Activated naive CD4-positive, alpha-beta T cell treated with anti-CD3 and anti-CD28 coated beads for 36 hours (primary cell): ENCODE measurements at regions of chr18 and their contacts with region 1.

Region 1: GRCh38 chr18:38790303-38790702 is 1224.7 kb upstream of the CELF4 start:
- DNase-seq: peak; percentile 15
- H3K4me3 Mint-ChIP-seq: no peak overlapping the region
- H3K27ac Mint-ChIP-seq: no peak overlapping the region
- H3K4me1 Mint-ChIP-seq: no peaks in the 10 kb centered on the region
- H3K27me3 Mint-ChIP-seq: no peaks in the 10 kb centered on the region

Region 2: GRCh38 chr18:38545071-38545470 is 245.2 kb before region 1 on chr18:
- CTCF ChIA-PET with region 1: no interaction called
- intact Hi-C with region 1: loop called (anchors 1 kb)
- DNase-seq: peak; percentile 39
- H3K4me3 Mint-ChIP-seq: no peak overlapping the region
- H3K27ac Mint-ChIP-seq: no peak overlapping the region
- H3K4me1 Mint-ChIP-seq: no peaks in the 10 kb centered on the region
- H3K27me3 Mint-ChIP-seq: no peaks in the 10 kb centered on the region

Region 3: DNA sequence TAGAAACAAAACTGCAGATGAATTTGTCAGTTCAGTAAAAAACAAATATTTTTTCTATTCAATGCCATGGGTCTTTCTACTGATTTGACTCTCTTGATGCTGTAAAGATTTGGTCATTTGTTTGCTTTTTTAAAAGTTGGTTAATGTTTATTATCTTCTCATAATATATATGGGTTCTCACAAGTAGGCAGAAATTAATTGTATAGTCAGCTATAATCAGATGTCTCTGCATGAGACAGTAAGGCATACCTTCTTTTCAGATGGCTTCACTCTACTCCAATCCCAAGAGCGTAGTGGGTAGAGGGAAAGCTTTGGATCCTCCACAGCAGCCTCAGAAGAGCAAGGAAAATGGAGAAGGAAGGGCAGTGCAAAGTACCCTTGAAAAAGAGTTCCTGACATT is 21.8 kb before region 1 on chr18:
- CTCF ChIA-PET with region 1: no interaction called
- intact Hi-C with region 1: no loop called
- DNase-seq: no peak
- H3K4me3 Mint-ChIP-seq: no peak overlapping the region
- H3K27ac Mint-ChIP-seq: no peak overlapping the region
- H3K4me1 Mint-ChIP-seq: peaks cover 10% of the 10 kb centered on the region
- H3K27me3 Mint-ChIP-seq: peaks cover 3% of the 10 kb centered on the region